Endothelial cell of umbilical vein (primary cell): ENCODE measurements at regions of chr1 and their contacts with region 1.

Region 1: DNA sequence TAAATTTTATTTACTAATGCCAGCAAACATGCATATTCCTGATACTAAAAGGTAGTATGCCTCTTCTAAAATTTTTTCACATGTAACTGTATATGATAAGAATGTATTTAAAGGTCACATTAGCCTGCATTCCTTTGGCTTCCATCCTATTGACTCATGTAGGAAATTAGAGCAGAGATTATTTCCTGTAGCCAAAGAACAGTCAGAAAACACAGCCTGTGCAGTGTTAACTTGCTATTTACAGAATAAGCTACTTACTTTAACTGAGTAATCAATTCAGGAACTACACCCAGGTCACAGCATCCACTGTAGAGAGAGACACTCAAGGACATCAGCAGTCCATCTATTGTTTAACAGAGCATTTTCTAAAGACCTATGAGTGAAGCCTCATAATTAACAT is 154.5 kb upstream of the ADGRL4 start:
- DNase-seq: peak; percentile 89
- H3K4me3 ChIP-seq: no peak overlapping the region
- H3K27ac ChIP-seq: peak overlapping the region; percentile 77
- H3K4me1 ChIP-seq: peaks cover 16% of the 10 kb centered on the region
- H3K27me3 ChIP-seq: no peaks in the 10 kb centered on the region
- CTCF ChIP-seq: no peak
- POLR2A ChIP-seq: no peak

Region 2: GRCh38 chr1:79128722-79129121 is 32.4 kb before region 1 on chr1:
- CTCF ChIA-PET with region 1: no interaction called
- POLR2A ChIA-PET with region 1: no interaction called
- dilution Hi-C with region 1: no loop called
- intact Hi-C with region 1: loop called (anchors 2 kb)
- DNase-seq: peak; percentile 71
- H3K4me3 ChIP-seq: no peak overlapping the region
- H3K27ac ChIP-seq: no peak overlapping the region
- H3K4me1 ChIP-seq: peaks cover 12% of the 10 kb centered on the region
- H3K27me3 ChIP-seq: no peaks in the 10 kb centered on the region
- CTCF ChIP-seq: no peak
- POLR2A ChIP-seq: no peak

Region 3: GRCh38 chr1:79188321-79188720 is 27.2 kb after region 1 on chr1:
- CTCF ChIA-PET with region 1: interaction called, 8 read pairs
- POLR2A ChIA-PET with region 1: no interaction called
- dilution Hi-C with region 1: no loop called
- intact Hi-C with region 1: loop called (anchors 1 kb)
- DNase-seq: peak; percentile 90
- H3K4me3 ChIP-seq: peak overlapping the region in 2 of 3 experiments; percentile 15 to 26
- H3K27ac ChIP-seq: peak overlapping the region; percentile 51
- H3K4me1 ChIP-seq: peaks cover 39% of the 10 kb centered on the region
- H3K27me3 ChIP-seq: no peaks in the 10 kb centered on the region
- CTCF ChIP-seq: no peak
- POLR2A ChIP-seq: no peak